Activated CD8-positive, alpha-beta T cell treated with anti-CD3 and anti-CD28 coated beads, Interleukin-2, amount 10 ng/mL, durations not matched to agents 7 days and 5 days (primary cell): ENCODE measurements at regions of chr16 and their contacts with region 1.

Region 1: GRCh38 chr16:30615358-30616091 is 5.3 kb upstream of the ZNF689 start:
- DNase-seq: peak; percentile 83
- ATAC-seq: peak; percentile 68
- H3K4me3 Mint-ChIP-seq: no peak overlapping the region
- H3K27ac Mint-ChIP-seq: no peak overlapping the region
- H3K4me1 Mint-ChIP-seq: peaks cover 14% of the 10 kb centered on the region
- H3K27me3 Mint-ChIP-seq: peaks cover 13% of the 10 kb centered on the region

Region 2: GRCh38 chr16:30417529-30418349 is 197.8 kb before region 1 on chr16:
- CTCF ChIA-PET with region 1: interaction called, 12 read pairs
- POLR2A ChIA-PET with region 1: no interaction called
- DNase-seq: peak; percentile 92
- ATAC-seq: peak; percentile 88
- H3K4me3 Mint-ChIP-seq: peak overlapping the region; percentile 61
- H3K27ac Mint-ChIP-seq: peak overlapping the region; percentile 55
- H3K4me1 Mint-ChIP-seq: peaks cover 25% of the 10 kb centered on the region
- H3K27me3 Mint-ChIP-seq: no peaks in the 10 kb centered on the region

Region 3: DNA sequence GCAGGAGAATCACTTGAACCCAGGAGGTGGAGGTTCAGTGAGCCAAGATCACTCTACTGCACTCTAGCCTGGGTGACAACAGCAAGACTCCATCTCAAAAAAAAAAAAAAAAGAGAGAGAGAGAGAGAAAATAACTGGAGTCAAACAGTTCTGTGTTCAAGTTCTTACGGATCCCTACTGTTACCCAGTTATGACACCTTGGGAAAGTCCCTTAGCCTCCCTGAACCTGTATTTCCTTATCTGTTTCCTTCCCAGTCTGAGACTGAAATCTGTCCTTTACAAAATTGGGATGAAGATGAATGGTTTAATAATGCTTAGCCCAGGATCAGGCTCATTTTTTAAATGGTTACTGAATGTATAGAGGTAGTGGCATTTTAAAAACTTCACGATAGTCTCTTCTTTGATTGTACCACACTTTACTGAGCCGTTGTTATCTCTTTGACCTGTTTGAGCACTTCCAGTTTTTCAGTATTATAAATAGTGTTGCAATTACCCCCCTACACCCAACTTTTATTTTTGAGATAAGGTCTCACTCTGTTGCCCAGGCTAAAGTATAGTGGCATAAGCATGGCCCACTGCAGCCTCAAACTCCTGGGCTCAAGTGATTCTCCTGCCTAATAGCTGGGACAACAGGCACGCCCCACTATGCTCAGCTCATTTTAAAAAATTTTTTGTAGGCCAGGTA is 106.3 kb before region 1 on chr16:
- CTCF ChIA-PET with region 1: no interaction called
- POLR2A ChIA-PET with region 1: no interaction called
- DNase-seq: no peak
- ATAC-seq: no peak
- H3K4me3 Mint-ChIP-seq: no peak overlapping the region
- H3K27ac Mint-ChIP-seq: no peak overlapping the region
- H3K4me1 Mint-ChIP-seq: peaks cover 7% of the 10 kb centered on the region
- H3K27me3 Mint-ChIP-seq: no peaks in the 10 kb centered on the region

Region 4: GRCh38 chr16:30637942-30638341 is 22.4 kb after region 1 on chr16:
- CTCF ChIA-PET with region 1: interaction called, 20 read pairs
- POLR2A ChIA-PET with region 1: interaction called, 3 read pairs
- DNase-seq: peak; percentile 58
- ATAC-seq: no peak
- H3K4me3 Mint-ChIP-seq: no peak overlapping the region
- H3K27ac Mint-ChIP-seq: no peak overlapping the region
- H3K4me1 Mint-ChIP-seq: peaks cover 12% of the 10 kb centered on the region
- H3K27me3 Mint-ChIP-seq: peaks cover 4% of the 10 kb centered on the region